Sciatic nerve (tissue), 2 donors: ENCODE measurements at regions of chr10 and their contacts with region 1.

Region 1: DNA sequence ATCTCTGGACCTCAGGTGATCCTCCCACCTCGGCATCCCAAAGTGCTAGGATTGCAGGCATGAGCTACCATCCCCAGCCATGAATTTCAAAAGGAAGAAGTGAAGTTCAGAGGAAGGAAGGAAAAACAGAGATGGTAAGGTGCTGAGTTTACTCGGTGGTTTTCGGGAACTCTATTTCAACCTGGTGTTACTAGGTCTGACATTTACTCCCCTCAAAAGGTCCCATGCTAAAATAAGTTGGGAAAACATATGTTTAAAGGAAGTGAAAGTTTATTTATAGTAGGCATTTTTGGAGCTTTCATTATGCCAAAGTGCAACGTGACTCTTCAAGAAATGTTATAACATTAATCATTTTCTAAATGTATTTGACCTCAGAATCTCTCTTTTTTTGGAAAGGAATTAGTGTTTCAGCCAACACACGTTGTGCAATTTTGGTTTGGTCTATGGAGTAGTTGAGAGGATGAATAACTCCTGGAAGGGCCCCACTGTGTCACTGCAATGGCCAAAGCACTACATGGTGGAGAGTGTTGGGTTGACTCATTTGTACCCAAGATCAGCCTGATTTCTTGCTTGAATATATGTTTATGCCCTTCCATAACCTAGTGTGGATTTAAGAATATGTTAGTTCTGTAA is 114.7 kb upstream of the FAM171A1 start:
- DNase-seq: no peak
- ATAC-seq: peak; percentile 81

Region 2: GRCh38 chr10:15540727-15541126 is 54.9 kb after region 1 on chr10:
- intact Hi-C with region 1: no loop called
- DNase-seq: no peak
- ATAC-seq: no peak

Region 3: GRCh38 chr10:15585303-15585715 is 99.5 kb after region 1 on chr10:
- intact Hi-C with region 1: loop called (anchors 10 kb)
- DNase-seq: peak; percentile 72
- ATAC-seq: peak; percentile 92